ENCODE measurements at regions of chr15 and their contacts with region 1.

Region 1: DNA sequence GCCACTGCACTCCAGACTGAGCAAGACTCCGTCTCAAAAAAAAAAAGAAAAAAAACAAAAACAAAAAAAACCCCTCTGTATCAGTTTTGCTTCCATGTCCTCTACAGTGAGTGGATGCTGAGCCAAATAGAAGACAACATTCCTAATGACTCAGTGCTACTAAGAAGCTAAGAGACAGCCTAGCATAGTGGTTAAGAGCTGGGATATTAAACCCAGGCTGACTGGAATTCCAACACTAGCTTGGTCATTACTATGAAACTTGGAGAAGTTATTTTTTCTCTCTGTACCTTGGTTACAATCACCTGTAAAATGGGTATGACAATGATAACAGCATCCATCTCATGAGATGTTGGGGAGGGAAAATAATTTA is 60.9 kb upstream of the PYGO1 start:
- DNase-seq: no peak
- ATAC-seq: no peak
- H3K4me3 ChIP-seq: no peak overlapping the region
- H3K4me3 Mint-ChIP-seq: no peak overlapping the region
- H3K27ac ChIP-seq: no peak overlapping the region
- H3K27ac Mint-ChIP-seq: no peak overlapping the region
- H3K4me1 ChIP-seq: no peaks in the 10 kb centered on the region
- H3K4me1 Mint-ChIP-seq: no peaks in the 10 kb centered on the region
- H3K27me3 ChIP-seq: no peaks in the 10 kb centered on the region
- H3K27me3 Mint-ChIP-seq: peaks cover 4% of the 10 kb centered on the region
- CTCF ChIP-seq: no peak

Region 2: GRCh38 chr15:55799291-55800212 is 150.5 kb after region 1 on chr15:
- CTCF ChIA-PET with region 1: interaction called, 3 read pairs
- POLR2A ChIA-PET with region 1: no interaction called
- intact Hi-C with region 1: loop called (anchors 2 kb)
- DNase-seq: peak; percentile 6
- ATAC-seq: no peak
- H3K4me3 ChIP-seq: no peak overlapping the region
- H3K4me3 Mint-ChIP-seq: no peak overlapping the region
- H3K27ac ChIP-seq: no peak overlapping the region
- H3K27ac Mint-ChIP-seq: no peak overlapping the region
- H3K4me1 ChIP-seq: no peaks in the 10 kb centered on the region
- H3K4me1 Mint-ChIP-seq: no peaks in the 10 kb centered on the region
- H3K27me3 ChIP-seq: peaks cover 0 to 9% (median 2%) of the 10 kb centered on the region in 4 experiments
- H3K27me3 Mint-ChIP-seq: peaks cover 28% of the 10 kb centered on the region
- CTCF ChIP-seq: no peak

Region 3: GRCh38 chr15:55846116-55846707 is 197.2 kb after region 1 on chr15:
- CTCF ChIA-PET with region 1: interaction called, 38 read pairs
- POLR2A ChIA-PET with region 1: no interaction called
- intact Hi-C with region 1: no loop called
- DNase-seq: peak; percentile 62
- ATAC-seq: no peak
- H3K4me3 ChIP-seq: no peak overlapping the region
- H3K4me3 Mint-ChIP-seq: no peak overlapping the region
- H3K27ac ChIP-seq: no peak overlapping the region
- H3K27ac Mint-ChIP-seq: no peak overlapping the region
- H3K4me1 ChIP-seq: no peaks in the 10 kb centered on the region
- H3K4me1 Mint-ChIP-seq: no peaks in the 10 kb centered on the region
- H3K27me3 ChIP-seq: no peaks in the 10 kb centered on the region
- H3K27me3 Mint-ChIP-seq: no peaks in the 10 kb centered on the region
- CTCF ChIP-seq: peak; percentile 93

Region 4: DNA sequence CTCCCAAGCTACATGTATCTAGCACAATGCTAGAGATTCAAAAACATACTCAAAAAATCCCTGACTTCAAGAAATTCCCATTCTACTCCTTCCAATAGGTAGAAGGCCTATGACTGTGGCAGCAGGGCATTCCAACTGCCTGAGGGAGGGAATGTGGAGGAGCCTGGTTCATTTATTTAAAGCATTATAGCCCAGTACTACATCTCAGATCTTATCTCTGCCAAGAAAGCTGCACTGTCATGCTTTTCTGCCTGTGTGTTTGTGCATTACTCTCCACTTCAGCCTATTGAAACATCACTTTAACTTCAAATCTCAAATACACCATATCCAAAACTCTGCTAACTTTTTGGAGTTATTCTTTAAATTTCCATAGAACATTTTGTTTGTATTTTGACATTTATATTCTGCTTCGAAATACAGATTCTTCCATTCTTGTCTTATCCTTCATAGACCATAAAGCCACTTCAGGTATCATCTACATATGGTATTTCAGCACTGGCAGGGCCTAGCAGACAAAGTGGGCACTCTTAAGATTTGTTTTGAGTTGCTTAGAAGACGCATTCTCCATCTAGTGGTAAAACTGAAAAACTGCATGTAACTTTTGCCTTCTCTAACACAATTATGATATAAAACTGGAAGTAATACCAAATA is 403.5 kb after region 1 on chr15:
- CTCF ChIA-PET with region 1: interaction called, 3 read pairs
- POLR2A ChIA-PET with region 1: no interaction called
- intact Hi-C with region 1: loop called (anchors 2 kb)
- DNase-seq: peak; percentile 40
- ATAC-seq: peak; percentile 47
- H3K4me3 ChIP-seq: no peak overlapping the region
- H3K4me3 Mint-ChIP-seq: no peak overlapping the region
- H3K27ac ChIP-seq: no peak overlapping the region
- H3K27ac Mint-ChIP-seq: no peak overlapping the region
- H3K4me1 ChIP-seq: no peaks in the 10 kb centered on the region
- H3K4me1 Mint-ChIP-seq: no peaks in the 10 kb centered on the region
- H3K27me3 ChIP-seq: no peaks in the 10 kb centered on the region
- H3K27me3 Mint-ChIP-seq: peaks cover 4% of the 10 kb centered on the region
- CTCF ChIP-seq: peak; percentile 93

Region 5: GRCh38 chr15:56428821-56429458 is 779.9 kb after region 1 on chr15:
- CTCF ChIA-PET with region 1: interaction called, 5 read pairs
- POLR2A ChIA-PET with region 1: no interaction called
- intact Hi-C with region 1: loop called (anchors 1 kb)
- DNase-seq: peak; percentile 49
- ATAC-seq: no peak
- H3K4me3 ChIP-seq: no peak overlapping the region
- H3K4me3 Mint-ChIP-seq: no peak overlapping the region
- H3K27ac ChIP-seq: no peak overlapping the region
- H3K27ac Mint-ChIP-seq: no peak overlapping the region
- H3K4me1 ChIP-seq: no peaks in the 10 kb centered on the region
- H3K4me1 Mint-ChIP-seq: no peaks in the 10 kb centered on the region
- H3K27me3 ChIP-seq: no peaks in the 10 kb centered on the region
- H3K27me3 Mint-ChIP-seq: no peaks in the 10 kb centered on the region
- CTCF ChIP-seq: peak; percentile 73